B cell (primary cell): ENCODE measurements at regions of chr1 and their contacts with region 1.

Region 1: DNA sequence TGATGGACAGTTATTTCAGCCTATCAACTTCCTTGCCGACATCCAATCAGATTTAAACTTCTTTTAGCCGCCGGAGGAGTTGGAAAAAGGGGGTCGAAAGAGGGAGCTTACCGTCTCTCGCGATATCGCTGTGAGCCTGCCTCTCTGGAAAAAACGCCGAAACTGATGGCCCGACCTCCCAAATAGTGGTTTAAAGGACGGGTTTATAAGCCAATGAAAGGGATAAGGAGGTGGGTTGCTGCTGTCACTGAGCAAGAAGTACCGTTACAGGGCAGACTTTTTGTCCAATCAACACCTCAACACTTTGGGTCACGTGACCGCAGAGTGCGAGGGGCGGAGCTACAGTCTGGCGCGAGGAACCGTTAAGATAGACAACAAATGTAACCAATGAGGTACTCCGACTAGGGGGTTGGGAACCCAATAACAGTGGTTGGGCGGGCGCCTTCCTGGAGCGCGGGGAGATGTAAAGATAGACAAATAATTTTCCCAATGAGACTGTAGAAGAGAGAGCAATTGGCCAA is at the start of gene RBM15:
- DNase-seq: peak; percentile 100
- ATAC-seq: peak; percentile 73
- H3K4me3 ChIP-seq: peak within 1 kb of the TSS; percentile 61 to 100 (median 98)
- H3K4me3 Mint-ChIP-seq: no peak within 1 kb of the TSS
- H3K27ac ChIP-seq: peak within 1 kb of the TSS; percentile 95 to 97
- H3K27ac Mint-ChIP-seq: no peak within 1 kb of the TSS
- H3K4me1 ChIP-seq: peaks cover 43 to 44% of the 10 kb centered on the region in 2 donors
- H3K4me1 Mint-ChIP-seq: peaks cover 51% of the 10 kb centered on the region
- H3K27me3 ChIP-seq: no peaks in the 10 kb centered on the region
- H3K27me3 Mint-ChIP-seq: no peaks in the 10 kb centered on the region
- CTCF ChIP-seq: no peak
- total RNA-seq, gene RBM15: 97.7 and 102 TPM in 2 replicates

Region 2: DNA sequence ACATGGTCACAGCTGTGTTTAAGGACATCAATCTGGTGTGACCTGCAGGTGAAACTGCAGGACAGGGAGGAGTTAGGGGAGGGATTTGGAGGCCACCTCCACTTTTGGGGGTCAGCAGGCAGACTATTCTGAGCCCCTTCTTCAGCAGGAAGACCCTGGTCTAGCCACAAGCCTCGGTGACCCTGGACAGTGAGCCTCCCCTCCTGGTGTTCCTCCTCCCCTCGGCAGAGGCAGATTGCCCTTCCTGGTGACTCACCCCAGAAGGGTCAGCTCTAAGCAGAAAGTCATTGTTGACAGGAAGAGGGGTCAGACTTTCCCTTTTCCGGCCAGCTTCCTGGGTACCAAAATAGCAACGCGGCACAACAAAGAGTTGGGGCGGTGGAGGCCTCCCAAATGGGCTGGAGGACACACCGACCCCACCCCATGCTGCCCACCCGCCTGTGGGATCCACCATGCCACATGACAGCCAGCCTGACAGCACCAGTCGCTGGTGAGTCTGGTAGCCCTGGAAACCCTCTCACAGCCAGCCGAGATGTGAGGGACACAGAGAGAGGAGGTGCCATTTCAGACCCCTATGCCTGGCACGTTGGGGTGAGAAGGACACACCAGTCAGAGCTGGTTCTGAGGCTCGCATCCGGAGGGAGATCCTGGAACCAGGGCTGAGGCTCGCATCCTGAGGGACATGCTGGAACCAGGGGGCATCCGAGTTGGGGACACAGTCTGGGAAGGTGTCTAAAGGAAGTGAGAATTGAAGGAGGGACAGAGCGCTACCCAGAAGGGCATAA is 443.0 kb before region 1 on chr1:
- CTCF ChIA-PET with region 1: no interaction called
- POLR2A ChIA-PET with region 1: no interaction called
- intact Hi-C with region 1: no loop called
- DNase-seq: no peak
- ATAC-seq: no peak
- H3K4me3 ChIP-seq: no peak overlapping the region
- H3K4me3 Mint-ChIP-seq: no peak overlapping the region
- H3K27ac ChIP-seq: no peak overlapping the region
- H3K27ac Mint-ChIP-seq: no peak overlapping the region
- H3K4me1 ChIP-seq: peaks cover 17 to 19% of the 10 kb centered on the region in 2 donors
- H3K4me1 Mint-ChIP-seq: peaks cover 10% of the 10 kb centered on the region
- H3K27me3 ChIP-seq: peaks cover 0 to 31% (median 2%) of the 10 kb centered on the region in 4 experiments
- H3K27me3 Mint-ChIP-seq: peaks cover 14% of the 10 kb centered on the region
- CTCF ChIP-seq: no peak

Region 3: DNA sequence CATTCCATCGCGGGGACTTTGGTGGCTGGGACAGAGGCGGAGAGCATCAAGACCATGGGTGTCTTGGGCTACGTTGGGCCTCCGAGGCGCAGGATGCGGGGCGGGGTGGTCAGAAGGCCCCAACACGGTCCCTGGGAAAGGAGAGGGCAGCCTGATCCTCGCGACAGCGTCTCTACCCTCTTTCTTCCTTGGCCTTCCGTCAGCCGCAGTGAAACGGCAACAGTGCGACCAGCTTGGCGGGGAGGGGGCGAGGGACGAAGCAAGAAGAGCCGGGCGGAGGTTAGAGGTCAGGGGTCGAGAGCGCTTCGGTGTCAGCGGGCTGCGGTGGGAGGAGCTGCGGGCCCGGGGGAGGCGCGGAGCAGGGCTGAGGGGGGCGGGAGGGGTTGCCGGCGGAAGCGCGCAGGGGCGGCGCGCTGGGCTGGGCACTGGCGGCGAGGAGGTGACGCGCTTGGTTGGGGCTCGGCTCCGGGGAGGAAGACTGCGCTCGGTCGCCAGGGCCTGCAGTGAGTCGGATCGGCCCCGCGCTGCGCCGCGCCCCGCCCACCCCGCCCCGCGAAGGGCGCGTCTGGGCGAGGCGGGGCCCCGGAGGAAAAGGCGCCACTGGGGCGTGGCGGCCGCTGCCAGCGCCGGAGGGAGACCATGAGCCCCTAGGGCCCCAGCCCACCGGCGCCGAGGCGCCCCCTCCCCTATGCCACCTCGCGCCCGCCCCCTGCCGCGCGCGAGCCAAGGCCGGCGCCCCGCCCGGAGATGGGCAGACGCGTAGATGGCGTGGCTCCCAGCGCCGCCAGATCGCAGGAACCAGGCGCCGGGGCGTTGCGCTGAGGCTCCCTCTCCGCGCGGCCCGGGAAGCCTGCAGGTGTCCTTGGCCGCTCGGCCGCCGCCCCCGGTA is 129.0 kb before region 1 on chr1 and contains the start of gene KCNC4:
- CTCF ChIA-PET with region 1: interaction called, 121 read pairs
- POLR2A ChIA-PET with region 1: interaction called, 29 read pairs
- intact Hi-C with region 1: loop called (anchors 1 kb)
- DNase-seq: peak; percentile 96
- ATAC-seq: peak; percentile 85
- H3K4me3 ChIP-seq: peak within 1 kb of the TSS; percentile 34 to 75 (median 66)
- H3K4me3 Mint-ChIP-seq: peak within 1 kb of the TSS; percentile 95
- H3K27ac ChIP-seq: peak within 1 kb of the TSS; percentile 76 to 83
- H3K27ac Mint-ChIP-seq: peak within 1 kb of the TSS; percentile 96
- H3K4me1 ChIP-seq: peaks cover 17 to 31% of the 10 kb centered on the region in 2 donors
- H3K4me1 Mint-ChIP-seq: peaks cover 43% of the 10 kb centered on the region
- H3K27me3 ChIP-seq: peaks cover 0 to 8% (median 0%) of the 10 kb centered on the region in 4 experiments
- H3K27me3 Mint-ChIP-seq: no peaks in the 10 kb centered on the region
- CTCF ChIP-seq: no peak
- total RNA-seq, gene KCNC4: 24.1 and 24.3 TPM in 2 replicates

Region 4: DNA sequence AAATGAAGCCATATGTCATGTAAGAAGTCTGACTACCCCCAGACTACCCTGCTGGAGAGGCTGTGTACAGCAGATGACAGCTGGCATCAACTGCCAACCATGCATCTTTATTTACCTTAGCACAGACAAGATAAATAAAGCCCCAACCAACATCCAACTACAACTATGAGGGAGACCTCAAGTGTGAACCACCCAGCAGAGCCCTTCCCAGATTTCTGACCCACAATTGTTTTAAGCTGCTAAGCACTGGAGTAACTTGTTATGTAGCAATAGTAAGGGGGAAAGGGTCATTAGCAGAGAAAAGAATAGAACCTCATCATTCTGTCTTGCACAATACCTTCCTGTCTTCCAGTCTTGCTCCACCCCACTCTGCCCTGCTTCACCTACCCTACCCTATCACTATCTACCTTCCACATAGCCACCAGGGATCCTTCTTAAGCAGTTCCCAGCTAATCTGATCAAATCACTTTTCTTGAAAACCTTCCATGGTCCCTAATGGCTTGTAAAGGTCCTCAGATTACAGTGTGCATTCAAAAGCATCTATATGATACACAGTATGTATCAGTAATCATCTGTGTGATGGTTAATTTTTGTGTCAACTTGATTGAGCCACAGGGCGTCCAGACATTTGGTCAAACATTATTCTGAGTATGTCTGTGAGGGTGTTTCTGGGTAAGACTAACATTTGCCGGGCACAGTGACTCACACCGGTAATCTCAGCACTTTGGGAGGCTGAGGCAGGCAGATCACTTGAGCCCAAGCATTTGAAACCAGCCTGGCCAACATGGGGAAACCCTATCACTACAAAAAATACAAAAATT is 19.4 kb before region 1 on chr1:
- CTCF ChIA-PET with region 1: interaction called, 58 read pairs
- POLR2A ChIA-PET with region 1: no interaction called
- intact Hi-C with region 1: no loop called
- DNase-seq: no peak
- ATAC-seq: no peak
- H3K4me3 ChIP-seq: no peak overlapping the region
- H3K4me3 Mint-ChIP-seq: no peak overlapping the region
- H3K27ac ChIP-seq: no peak overlapping the region
- H3K27ac Mint-ChIP-seq: no peak overlapping the region
- H3K4me1 ChIP-seq: no peaks in the 10 kb centered on the region
- H3K4me1 Mint-ChIP-seq: no peaks in the 10 kb centered on the region
- H3K27me3 ChIP-seq: no peaks in the 10 kb centered on the region
- H3K27me3 Mint-ChIP-seq: no peaks in the 10 kb centered on the region
- CTCF ChIP-seq: no peak

Region 5: DNA sequence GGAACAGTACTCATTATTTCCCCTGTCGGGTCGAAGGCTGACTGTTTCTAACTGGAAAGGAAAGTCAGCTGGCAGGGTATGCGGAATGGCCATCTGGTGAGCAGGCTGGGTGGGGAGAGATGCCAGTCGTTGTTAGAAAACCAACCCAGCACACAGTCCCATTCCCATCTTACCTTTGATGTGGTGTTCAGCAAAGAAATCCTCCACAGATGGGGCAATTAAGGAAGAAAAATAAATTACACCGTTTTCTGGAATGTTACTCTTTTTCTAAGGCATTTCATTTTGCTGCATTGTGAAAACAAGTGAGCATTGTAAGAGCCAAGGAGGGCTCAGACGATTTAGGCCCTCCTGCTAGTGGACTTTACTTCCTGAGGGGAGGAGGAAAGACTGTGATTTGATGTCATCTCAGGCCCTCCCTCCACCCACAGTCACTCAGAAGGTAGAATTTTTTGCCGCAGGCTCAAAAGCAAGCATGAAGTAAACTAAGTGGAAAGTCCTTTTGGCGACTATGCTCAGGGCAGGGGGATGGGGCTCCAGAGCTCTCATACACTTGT is 51.8 kb after region 1 on chr1 and contains the start of gene SLC16A4:
- CTCF ChIA-PET with region 1: interaction called, 139 read pairs
- POLR2A ChIA-PET with region 1: interaction called, 8 read pairs
- intact Hi-C with region 1: loop called (anchors 1 kb)
- DNase-seq: no peak
- ATAC-seq: no peak
- H3K4me3 ChIP-seq: no peak within 1 kb of the TSS
- H3K4me3 Mint-ChIP-seq: no peak within 1 kb of the TSS
- H3K27ac ChIP-seq: no peak within 1 kb of the TSS
- H3K27ac Mint-ChIP-seq: no peak within 1 kb of the TSS
- H3K4me1 ChIP-seq: peaks cover 14 to 27% of the 10 kb centered on the region in 2 donors
- H3K4me1 Mint-ChIP-seq: peaks cover 25% of the 10 kb centered on the region
- H3K27me3 ChIP-seq: no peaks in the 10 kb centered on the region
- H3K27me3 Mint-ChIP-seq: no peaks in the 10 kb centered on the region
- CTCF ChIP-seq: no peak
- total RNA-seq, gene SLC16A4: 1.9 and 2.6 TPM in 2 replicates

Region 6: GRCh38 chr1:110412576-110412975 is 73.6 kb after region 1 on chr1:
- CTCF ChIA-PET with region 1: interaction called, 257 read pairs
- POLR2A ChIA-PET with region 1: interaction called, 37 read pairs
- intact Hi-C with region 1: loop called (anchors 1 kb)
- DNase-seq: peak; percentile 80
- ATAC-seq: peak; percentile 52
- H3K4me3 ChIP-seq: no peak overlapping the region
- H3K4me3 Mint-ChIP-seq: peak overlapping the region; percentile 77
- H3K27ac ChIP-seq: no peak overlapping the region
- H3K27ac Mint-ChIP-seq: peak overlapping the region; percentile 78
- H3K4me1 ChIP-seq: peaks cover 8 to 18% of the 10 kb centered on the region in 2 donors
- H3K4me1 Mint-ChIP-seq: peaks cover 29% of the 10 kb centered on the region
- H3K27me3 ChIP-seq: no peaks in the 10 kb centered on the region
- H3K27me3 Mint-ChIP-seq: no peaks in the 10 kb centered on the region
- CTCF ChIP-seq: peak; percentile 90

Region 7: DNA sequence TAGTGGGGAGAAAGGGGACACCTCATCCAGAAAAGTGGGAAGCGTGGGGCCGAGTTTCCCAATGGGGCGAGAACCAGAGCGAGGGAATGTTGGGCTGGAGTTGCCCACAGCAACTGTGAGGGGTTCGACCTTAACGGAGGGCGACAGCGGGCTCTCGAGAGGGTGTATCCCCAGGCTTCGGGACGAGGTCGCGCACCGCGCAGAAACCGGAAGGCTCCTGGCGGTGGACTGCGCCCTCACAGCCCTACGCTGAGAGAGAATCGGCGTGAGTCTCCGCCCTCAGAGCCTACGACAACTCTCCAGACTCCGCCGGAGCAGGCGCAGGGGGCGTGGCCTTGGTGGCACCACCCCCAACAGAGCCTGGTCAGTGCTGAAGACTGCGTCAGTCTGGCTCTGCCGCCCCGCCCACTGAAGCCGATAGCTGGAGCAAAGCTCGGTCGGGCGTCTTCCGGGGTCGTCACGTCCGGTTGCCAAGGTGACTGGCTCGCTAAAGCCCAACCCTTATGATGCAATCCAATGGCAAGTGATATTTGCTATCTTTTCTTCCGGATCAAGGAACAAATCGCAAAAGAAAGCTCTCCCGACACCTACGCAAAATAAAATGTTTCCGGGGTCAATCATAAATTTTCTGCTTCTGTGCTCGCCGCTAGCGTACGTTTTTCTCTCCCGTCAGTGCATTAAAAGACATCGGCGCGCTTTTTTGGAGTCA is 624.9 kb after region 1 on chr1 and contains the start of gene LRIF1:
- CTCF ChIA-PET with region 1: no interaction called
- POLR2A ChIA-PET with region 1: no interaction called
- intact Hi-C with region 1: loop called (anchors 2 kb)
- DNase-seq: peak; percentile 100
- ATAC-seq: peak; percentile 96
- H3K4me3 ChIP-seq: peak within 1 kb of the TSS; percentile 62 to 98 (median 82)
- H3K4me3 Mint-ChIP-seq: peak within 1 kb of the TSS; percentile 83
- H3K27ac ChIP-seq: peak within 1 kb of the TSS; percentile 95 to 98
- H3K27ac Mint-ChIP-seq: peak within 1 kb of the TSS; percentile 88
- H3K4me1 ChIP-seq: peaks cover 20 to 21% of the 10 kb centered on the region in 2 donors
- H3K4me1 Mint-ChIP-seq: peaks cover 30% of the 10 kb centered on the region
- H3K27me3 ChIP-seq: peaks cover 0 to 13% (median 7%) of the 10 kb centered on the region in 4 experiments
- H3K27me3 Mint-ChIP-seq: peaks cover 10% of the 10 kb centered on the region
- CTCF ChIP-seq: peak; percentile 60
- total RNA-seq, gene LRIF1: 22.6 and 26.5 TPM in 2 replicates